ENCODE measurements at regions of chr3 and their contacts with region 1.

Region 1: DNA sequence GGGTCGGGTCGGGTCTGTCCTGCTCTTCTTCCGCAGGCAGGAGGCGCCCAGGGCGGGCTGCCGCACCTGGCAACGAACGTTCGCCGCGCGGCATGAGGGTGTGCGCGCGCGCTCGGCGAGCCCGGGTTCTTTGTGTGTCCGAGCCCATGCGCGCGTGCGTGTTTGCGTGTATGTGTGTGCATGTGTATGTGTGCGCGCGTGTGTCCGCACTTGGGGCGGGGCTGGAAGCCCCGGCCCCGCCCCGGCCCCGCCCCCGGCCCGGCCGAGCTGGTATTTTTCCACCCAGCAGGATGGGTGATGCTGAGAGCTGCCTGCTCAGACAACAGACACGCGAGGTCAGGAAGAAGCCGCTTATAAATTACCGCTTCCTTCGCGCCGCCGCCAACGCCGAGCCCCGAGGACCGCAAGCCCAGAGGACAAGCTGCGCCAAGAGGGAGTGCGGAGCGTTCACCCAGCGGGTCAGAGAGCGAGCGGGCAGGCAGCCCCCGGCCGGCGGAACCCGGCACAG is at the start of gene SLC6A6:
- DNase-seq: peak; percentile 96
- H3K4me3 Mint-ChIP-seq: peak within 1 kb of the TSS; percentile 99
- H3K27ac Mint-ChIP-seq: peak within 1 kb of the TSS; percentile 86
- H3K4me1 Mint-ChIP-seq: peaks cover 6% of the 10 kb centered on the region
- H3K27me3 Mint-ChIP-seq: no peaks in the 10 kb centered on the region
- CTCF ChIP-seq: peak; percentile 53
- total RNA-seq, gene SLC6A6: 4.6 and 7.6 TPM in 2 replicates

Region 2: DNA sequence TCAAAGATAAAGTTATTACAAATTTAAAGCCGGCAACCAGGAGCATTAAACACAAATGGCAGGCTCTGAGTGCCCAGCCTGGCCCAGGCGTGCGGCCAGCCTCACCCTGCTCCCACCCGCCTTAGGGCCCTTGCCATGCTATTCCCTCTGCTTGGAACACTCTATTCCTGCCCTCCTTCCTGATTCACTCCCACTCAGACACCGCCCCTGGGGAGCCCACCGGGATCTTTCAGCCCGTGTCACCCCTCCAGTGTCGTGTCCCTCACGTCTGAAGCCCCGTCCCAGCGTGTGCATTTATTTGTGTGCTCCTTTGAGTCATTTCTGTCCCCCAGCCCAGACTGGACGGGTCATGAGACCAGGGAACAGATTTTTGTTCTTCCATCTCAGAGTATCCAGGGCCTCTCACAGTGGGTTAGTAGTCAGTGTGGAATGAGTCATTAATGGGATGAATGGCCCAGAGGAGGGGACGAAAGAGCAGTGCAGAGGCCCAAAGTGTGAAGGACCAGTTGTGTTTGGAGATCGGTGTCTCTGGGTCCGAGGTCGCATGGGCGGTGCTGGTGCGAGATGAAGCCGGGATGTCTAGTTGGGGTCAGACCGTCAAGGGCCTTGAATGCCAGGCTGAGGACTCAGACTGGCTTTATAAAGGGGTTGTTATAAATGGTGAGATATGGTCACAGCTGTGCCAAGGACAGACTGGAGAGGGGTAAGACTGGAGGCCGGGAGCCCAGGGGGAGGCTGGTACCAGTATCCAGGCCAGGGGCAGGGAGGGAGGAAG is 58.8 kb before region 1 on chr3:
- CTCF ChIA-PET with region 1: no interaction called
- POLR2A ChIA-PET with region 1: no interaction called
- intact Hi-C with region 1: loop called (anchors 2 kb)
- DNase-seq: no peak
- H3K4me3 Mint-ChIP-seq: no peak overlapping the region
- H3K27ac Mint-ChIP-seq: no peak overlapping the region
- H3K4me1 Mint-ChIP-seq: no peaks in the 10 kb centered on the region
- H3K27me3 Mint-ChIP-seq: peaks cover 8% of the 10 kb centered on the region
- CTCF ChIP-seq: no peak

Region 3: DNA sequence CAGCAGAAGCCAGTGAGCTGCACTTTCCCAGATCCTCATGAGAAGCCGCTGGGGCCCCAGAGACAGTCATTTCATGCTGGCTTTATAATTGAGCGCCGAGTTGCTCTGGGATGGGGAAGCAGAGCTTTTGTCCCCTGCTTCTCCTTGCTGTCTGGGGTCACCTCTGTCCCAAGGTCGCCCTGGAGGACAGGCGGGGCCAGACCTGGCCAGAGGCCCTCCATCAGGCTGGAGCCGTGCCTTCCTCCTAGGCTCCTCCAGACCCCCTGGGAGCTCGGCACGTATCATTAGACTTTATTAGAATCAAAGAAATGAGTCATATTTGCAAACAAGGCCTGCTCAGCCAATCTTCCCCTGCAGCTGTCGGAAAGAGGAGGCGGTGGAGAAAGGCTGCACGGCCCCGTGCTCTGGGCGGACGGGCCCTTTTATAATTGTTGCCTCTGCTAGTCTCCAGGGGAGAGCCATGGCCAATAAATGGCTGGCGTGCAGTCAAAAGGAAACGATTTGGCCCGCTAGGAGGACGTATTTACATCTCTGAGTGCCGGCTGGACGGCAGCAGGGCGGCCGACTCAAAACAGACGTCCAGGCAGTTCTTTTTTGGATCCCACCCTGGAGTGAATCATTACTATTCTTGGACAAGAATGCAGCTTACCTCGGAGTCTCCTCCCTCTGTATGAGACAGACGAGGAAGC is 50.5 kb after region 1 on chr3:
- CTCF ChIA-PET with region 1: interaction called, 5 read pairs
- POLR2A ChIA-PET with region 1: no interaction called
- intact Hi-C with region 1: loop called (anchors 2 kb)
- DNase-seq: peak; percentile 88
- H3K4me3 Mint-ChIP-seq: no peak overlapping the region
- H3K27ac Mint-ChIP-seq: peak overlapping the region; percentile 67
- H3K4me1 Mint-ChIP-seq: peaks cover 17% of the 10 kb centered on the region
- H3K27me3 Mint-ChIP-seq: no peaks in the 10 kb centered on the region
- CTCF ChIP-seq: no peak

Region 4: GRCh38 chr3:14461748-14462324 is 59.5 kb after region 1 on chr3:
- CTCF ChIA-PET with region 1: interaction called, 5 read pairs
- POLR2A ChIA-PET with region 1: no interaction called
- intact Hi-C with region 1: loop called (anchors 1 kb)
- DNase-seq: peak; percentile 61
- H3K4me3 Mint-ChIP-seq: no peak overlapping the region
- H3K27ac Mint-ChIP-seq: no peak overlapping the region
- H3K4me1 Mint-ChIP-seq: peaks cover 12% of the 10 kb centered on the region
- H3K27me3 Mint-ChIP-seq: no peaks in the 10 kb centered on the region
- CTCF ChIP-seq: peak; percentile 89

Region 5: DNA sequence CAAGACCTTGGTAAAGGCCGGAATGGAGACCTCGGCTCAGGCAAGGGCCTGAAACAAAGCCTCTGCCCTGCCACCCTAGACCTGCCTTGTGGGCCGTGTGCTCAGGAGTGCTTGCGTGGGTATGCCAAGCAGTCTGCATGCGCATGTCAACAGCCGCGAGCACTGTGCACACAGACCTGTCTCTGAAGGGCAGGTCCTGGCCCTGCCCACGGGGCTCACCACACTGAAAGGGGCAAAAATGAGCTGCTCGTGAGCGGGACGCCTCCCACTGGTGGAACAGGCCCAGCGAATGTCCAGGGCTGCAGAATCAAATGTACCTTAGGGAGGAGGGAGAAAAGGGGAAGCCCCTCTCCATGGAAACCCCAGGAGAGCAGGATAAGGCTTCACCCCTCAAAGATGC is 372.1 kb after region 1 on chr3:
- CTCF ChIA-PET with region 1: no interaction called
- POLR2A ChIA-PET with region 1: no interaction called
- intact Hi-C with region 1: no loop called
- DNase-seq: no peak
- H3K4me3 Mint-ChIP-seq: no peak overlapping the region
- H3K27ac Mint-ChIP-seq: no peak overlapping the region
- H3K4me1 Mint-ChIP-seq: no peaks in the 10 kb centered on the region
- H3K27me3 Mint-ChIP-seq: no peaks in the 10 kb centered on the region
- CTCF ChIP-seq: no peak

Measured in MCF 10A (cell line).